ENCODE measurements at regions of chr2 and their contacts with region 1.

Region 1: GRCh38 chr2:142989273-142990204 is 112.1 kb downstream of the KYNU start:
- DNase-seq: no peak
- ATAC-seq: no peak
- H3K4me3 ChIP-seq: no peak overlapping the region
- H3K27ac ChIP-seq: no peak overlapping the region
- H3K4me1 ChIP-seq: no peaks in the 10 kb centered on the region
- H3K27me3 ChIP-seq: peaks cover 0 to 2% of the 10 kb centered on the region in 2 donors

Region 2: DNA sequence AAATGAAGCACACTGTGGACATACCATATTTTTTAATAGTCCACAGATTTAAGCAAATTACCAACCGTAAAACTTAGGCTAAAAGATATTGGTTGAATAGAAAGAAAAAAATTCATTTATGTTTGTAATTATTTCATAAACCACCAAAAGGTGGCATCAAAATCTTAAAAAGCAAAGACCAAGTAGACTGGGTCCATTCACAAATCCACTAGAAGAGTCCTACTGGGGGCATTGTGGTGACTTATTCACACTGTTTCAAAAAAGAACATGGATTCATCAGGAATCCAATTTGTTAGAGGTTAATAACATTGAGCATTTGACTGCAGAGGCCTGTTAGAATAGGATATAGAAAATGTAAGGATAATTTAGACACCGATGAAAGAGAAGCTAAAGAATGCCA is 307.0 kb before region 1 on chr2:
- intact Hi-C with region 1: loop called (anchors 2 to 5 kb)
- DNase-seq: no peak
- ATAC-seq: no peak
- H3K4me3 ChIP-seq: no peak overlapping the region
- H3K27ac ChIP-seq: no peak overlapping the region
- H3K4me1 ChIP-seq: no peaks in the 10 kb centered on the region
- H3K27me3 ChIP-seq: no peaks in the 10 kb centered on the region

Measured in aorta (tissue), 5 donors.